Pancreas (tissue), 10 donors: ENCODE measurements at regions of chr3 and their contacts with region 1.

Region 1: DNA sequence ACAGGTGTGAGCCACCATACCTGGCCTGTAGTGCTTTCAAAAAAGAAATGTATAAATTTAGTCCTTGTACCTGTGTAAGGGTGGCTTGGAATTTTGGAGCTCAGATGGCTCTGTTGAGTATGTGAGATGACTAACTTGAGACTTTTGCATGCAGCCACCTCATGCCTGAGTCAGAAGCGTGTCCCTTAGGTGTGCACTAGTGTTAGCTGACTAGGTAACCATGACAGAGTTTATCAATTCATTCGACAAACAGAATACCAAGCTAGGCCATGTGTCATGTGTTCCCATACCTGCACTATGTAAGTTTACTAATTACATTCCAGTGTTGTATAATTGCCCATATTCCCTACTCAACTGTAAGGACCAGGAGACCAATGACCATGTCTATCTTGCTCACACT is 4.0 kb upstream of the ZNF639 start:
- DNase-seq: no peak
- ATAC-seq: no peak
- H3K4me3 ChIP-seq: no peak overlapping the region
- H3K27ac ChIP-seq: no peak overlapping the region
- H3K4me1 ChIP-seq: peaks cover 0 to 6% (median 0%) of the 10 kb centered on the region in 3 donors
- H3K27me3 ChIP-seq: no peaks in the 10 kb centered on the region
- CTCF ChIP-seq: no peak

Region 2: DNA sequence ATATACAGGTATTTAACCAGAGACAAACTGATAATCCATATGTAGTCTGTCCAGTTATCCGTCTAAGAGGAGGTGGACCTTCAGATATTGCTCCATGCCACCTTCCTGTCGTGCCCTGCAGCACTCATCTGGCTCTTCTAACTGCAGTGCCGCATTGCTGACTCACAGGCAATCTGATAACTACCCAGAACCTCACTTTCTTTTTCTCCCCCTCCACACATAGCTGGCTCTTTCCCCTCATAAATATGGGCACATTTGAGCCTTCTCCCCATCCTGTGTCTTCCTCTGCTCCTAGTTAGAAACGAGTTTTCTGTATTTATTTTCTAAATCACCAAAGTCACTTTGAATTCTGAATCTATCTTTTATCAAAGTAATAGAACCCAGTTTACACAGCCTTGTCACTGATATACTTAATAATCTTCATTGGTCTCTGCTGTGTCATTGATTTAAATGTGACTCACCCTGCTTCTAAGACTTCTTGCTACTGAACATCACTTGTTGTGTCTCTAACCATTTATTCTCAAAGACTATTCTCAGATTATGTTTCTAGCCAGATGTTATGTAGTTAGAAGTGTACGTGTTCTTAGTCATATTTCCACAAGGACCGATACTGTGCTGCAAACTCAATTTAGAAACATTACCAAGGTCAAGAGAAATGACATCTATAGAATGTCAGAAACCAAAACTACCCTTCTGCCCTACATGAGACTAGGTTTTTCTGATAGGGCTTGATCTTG is 800.0 kb before region 1 on chr3:
- intact Hi-C with region 1: no loop called
- DNase-seq: no peak
- ATAC-seq: peak; percentile 36 to 78 (median 62)
- H3K4me3 ChIP-seq: no peak overlapping the region
- H3K27ac ChIP-seq: no peak overlapping the region
- H3K4me1 ChIP-seq: peaks cover 0 to 5% (median 0%) of the 10 kb centered on the region in 3 donors
- H3K27me3 ChIP-seq: no peaks in the 10 kb centered on the region
- CTCF ChIP-seq: no peak

Region 3: GRCh38 chr3:179108086-179108485 is 210.8 kb before region 1 on chr3:
- intact Hi-C with region 1: loop called in 2 of 3 experiments (anchors 5 to 10 kb)
- DNase-seq: no peak
- ATAC-seq: no peak
- H3K4me3 ChIP-seq: no peak overlapping the region
- H3K27ac ChIP-seq: no peak overlapping the region
- H3K4me1 ChIP-seq: no peaks in the 10 kb centered on the region
- H3K27me3 ChIP-seq: no peaks in the 10 kb centered on the region
- CTCF ChIP-seq: no peak

Region 4: GRCh38 chr3:179373938-179374337 is 55.1 kb after region 1 on chr3:
- intact Hi-C with region 1: no loop called
- DNase-seq: no peak
- ATAC-seq: no peak
- H3K4me3 ChIP-seq: no peak overlapping the region
- H3K27ac ChIP-seq: no peak overlapping the region
- H3K4me1 ChIP-seq: no peaks in the 10 kb centered on the region
- H3K27me3 ChIP-seq: no peaks in the 10 kb centered on the region
- CTCF ChIP-seq: no peak